ENCODE measurements at regions of chr12 and their contacts with region 1.

Region 1: DNA sequence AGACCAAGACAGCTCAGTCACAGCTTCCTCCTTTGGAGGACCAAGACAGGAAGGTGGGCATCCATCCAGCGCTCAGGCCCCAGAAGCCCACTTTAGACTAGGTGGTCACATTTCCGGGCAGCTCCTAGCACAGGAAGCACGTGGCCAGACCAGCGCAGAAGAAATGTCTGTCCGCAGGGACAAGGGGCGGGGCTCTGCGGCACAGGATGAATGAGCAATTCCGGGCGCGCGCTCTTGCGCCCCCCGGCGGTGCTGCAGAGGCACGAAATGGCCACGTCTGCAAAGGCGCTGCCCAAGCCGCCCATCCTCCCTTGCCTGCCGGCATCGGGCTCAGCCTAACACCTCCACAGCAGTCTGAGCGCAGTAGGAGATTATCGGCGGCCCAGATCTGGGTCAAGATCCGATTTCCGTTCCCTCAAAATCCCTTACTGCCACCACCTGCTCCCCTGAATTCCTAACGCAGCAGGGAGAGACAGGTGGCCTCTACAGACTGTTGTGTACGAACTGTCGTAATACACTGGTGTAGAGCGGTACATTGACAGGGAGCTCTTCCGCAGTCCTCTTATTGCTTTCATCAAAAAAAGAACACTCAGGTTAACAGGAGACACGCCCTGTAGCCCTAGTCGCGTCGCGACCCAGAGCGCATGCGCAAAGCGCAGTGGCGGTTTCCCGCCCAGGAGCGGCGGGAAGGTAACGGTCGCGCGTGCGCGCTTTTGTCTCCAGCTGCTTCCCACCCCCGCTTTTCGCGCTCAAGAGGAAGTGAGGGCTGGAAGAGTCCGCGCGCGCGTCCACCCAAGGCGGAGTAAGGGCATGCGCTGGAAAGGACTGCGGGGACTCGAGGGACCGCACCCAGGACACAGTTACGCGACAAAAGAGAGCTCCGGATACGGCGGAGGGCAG is 794 bp downstream of the TUBA1B start:
- DNase-seq: peak; percentile 92
- H3K4me3 Mint-ChIP-seq: peak overlapping the region; percentile 98
- H3K27ac Mint-ChIP-seq: peak overlapping the region; percentile 93
- H3K4me1 Mint-ChIP-seq: peaks cover 59% of the 10 kb centered on the region
- H3K27me3 Mint-ChIP-seq: no peaks in the 10 kb centered on the region

Region 2: GRCh38 chr12:49018261-49019119 is 111.9 kb before region 1 on chr12 and contains the start of gene PRKAG1:
- intact Hi-C with region 1: loop called (anchors 1 kb)
- DNase-seq: peak; percentile 97
- H3K4me3 Mint-ChIP-seq: peak within 1 kb of the TSS; percentile 88
- H3K27ac Mint-ChIP-seq: peak within 1 kb of the TSS; percentile 95
- H3K4me1 Mint-ChIP-seq: peaks cover 53% of the 10 kb centered on the region
- H3K27me3 Mint-ChIP-seq: no peaks in the 10 kb centered on the region
- total RNA-seq, gene PRKAG1: 85.0 and 85.1 TPM in 2 replicates

Region 3: DNA sequence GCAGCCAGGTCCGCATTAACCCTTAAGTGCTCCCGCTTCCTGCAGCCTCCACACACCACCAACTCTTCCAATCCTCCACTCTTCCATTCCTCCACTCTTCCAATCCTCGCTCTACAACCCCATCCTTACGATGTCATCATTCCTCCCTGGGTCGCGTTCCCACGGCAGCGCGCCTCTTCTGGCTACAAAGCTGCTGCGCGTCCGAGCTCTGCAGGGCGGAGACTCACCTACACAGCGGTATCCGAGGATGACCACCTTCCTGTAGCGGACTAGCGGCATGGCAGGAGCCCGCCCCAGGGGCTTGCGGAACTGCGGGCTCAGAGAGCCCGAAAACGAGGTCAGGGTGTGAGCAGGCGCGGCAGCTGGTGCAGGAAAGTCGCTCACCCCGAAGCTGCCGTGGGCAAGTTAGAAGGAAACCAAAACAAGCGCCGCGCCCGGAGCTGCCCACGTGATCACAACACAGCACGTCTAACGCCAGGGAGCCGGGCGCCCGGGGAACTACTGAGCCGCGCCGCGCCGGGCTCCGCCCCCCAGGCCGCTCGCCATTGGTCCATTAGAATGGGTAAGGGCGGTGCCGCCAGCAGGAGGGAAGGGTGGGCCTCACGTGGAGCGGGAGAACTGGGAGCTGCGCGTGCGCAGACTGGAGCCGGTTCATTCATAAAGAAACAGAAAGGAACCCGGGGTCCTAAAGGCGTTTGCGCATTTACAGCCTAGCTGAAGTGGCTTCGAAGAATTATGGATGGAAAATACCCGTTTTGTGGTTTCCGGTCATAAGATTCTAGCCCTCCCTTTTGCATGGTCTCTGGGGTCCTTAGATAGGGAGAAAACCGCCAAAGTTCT is 60.7 kb before region 1 on chr12 and contains the start of gene RHEBL1:
- intact Hi-C with region 1: loop called (anchors 1 kb)
- DNase-seq: peak; percentile 100
- H3K4me3 Mint-ChIP-seq: peak within 1 kb of the TSS; percentile 100
- H3K27ac Mint-ChIP-seq: peak within 1 kb of the TSS; percentile 97
- H3K4me1 Mint-ChIP-seq: peaks cover 26% of the 10 kb centered on the region
- H3K27me3 Mint-ChIP-seq: no peaks in the 10 kb centered on the region
- total RNA-seq, gene RHEBL1: 8.6 and 10.7 TPM in 2 replicates

Region 4: DNA sequence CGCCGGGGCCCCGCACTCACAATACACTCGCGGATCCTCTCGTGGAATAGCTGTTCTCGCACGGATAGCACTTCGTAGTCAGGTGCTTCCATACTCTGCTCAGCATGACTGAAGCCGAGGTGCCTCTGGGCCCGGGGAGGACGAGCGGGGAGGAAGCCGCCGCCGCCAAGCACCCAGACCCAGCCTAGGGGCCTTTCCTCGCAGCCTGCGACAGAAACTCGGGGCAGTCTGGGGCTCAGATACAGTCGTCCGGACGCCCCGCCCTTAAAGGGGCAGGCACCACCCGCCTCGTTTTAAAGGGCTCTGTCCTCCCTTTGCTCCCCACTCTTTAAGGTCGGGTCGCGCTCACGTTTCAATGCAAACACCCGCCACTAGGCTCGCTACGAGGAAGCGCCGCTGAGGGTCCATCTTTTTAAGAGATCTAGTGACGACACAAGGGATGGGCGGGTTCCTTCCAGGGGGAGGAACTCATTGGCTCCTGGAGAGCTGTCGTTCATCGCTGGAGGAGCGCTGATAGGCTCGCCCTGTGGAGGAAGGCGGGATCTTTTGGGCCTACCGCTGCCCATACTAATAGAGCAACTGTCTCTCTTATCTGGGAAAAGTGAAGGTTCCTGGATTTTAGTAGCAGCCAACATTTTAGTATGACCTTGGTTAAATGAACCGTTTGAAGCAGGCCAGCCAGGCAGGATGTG is 19.8 kb before region 1 on chr12 and contains the start of gene LMBR1L:
- intact Hi-C with region 1: loop called (anchors 1 kb)
- DNase-seq: peak; percentile 93
- H3K4me3 Mint-ChIP-seq: peak within 1 kb of the TSS; percentile 93
- H3K27ac Mint-ChIP-seq: peak within 1 kb of the TSS; percentile 92
- H3K4me1 Mint-ChIP-seq: peaks cover 37% of the 10 kb centered on the region
- H3K27me3 Mint-ChIP-seq: no peaks in the 10 kb centered on the region
- total RNA-seq, gene LMBR1L: 50.4 and 52.5 TPM in 2 replicates

Region 5: DNA sequence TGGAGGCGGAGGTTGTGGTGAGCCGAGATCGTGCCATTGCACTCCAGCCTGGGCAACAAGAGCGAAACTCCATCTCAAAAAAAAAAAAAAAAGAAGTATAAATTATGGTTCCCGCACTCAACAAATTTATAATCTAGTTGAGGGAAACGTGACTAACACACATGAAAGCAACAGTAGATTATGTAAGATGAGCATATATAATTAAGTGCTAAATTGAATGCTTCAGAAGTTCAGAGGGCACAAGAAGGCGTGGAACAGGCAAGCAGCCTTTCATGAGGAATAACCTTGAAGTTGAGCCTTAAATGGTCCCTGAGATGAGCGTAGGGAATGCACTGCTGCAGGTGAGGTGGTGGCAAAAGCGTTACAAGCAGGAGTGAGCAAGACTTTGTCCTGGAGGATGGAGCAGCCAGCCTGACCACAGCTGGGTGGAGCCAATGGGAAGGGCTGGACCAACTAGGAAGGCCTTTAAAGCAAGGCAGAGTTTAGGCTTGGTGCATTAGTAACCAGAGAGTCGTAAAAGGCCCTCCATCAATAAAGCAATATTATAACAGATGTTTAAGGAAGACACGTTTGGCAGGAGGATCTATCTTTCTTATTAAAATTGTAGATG is 89.1 kb after region 1 on chr12:
- intact Hi-C with region 1: no loop called
- DNase-seq: no peak
- H3K4me3 Mint-ChIP-seq: no peak overlapping the region
- H3K27ac Mint-ChIP-seq: no peak overlapping the region
- H3K4me1 Mint-ChIP-seq: no peaks in the 10 kb centered on the region
- H3K27me3 Mint-ChIP-seq: peaks cover 5% of the 10 kb centered on the region

Region 6: GRCh38 chr12:49232940-49233841 is 102.8 kb after region 1 on chr12:
- intact Hi-C with region 1: loop called (anchors 1 kb)
- DNase-seq: no peak
- H3K4me3 Mint-ChIP-seq: peak overlapping the region; percentile 67
- H3K27ac Mint-ChIP-seq: peak overlapping the region; percentile 73
- H3K4me1 Mint-ChIP-seq: peaks cover 9% of the 10 kb centered on the region
- H3K27me3 Mint-ChIP-seq: peaks cover 13% of the 10 kb centered on the region

Region 7: GRCh38 chr12:49322708-49323523 is 192.5 kb after region 1 on chr12 and contains the start of gene TROAP:
- intact Hi-C with region 1: loop called (anchors 1 kb)
- DNase-seq: peak; percentile 97
- H3K4me3 Mint-ChIP-seq: peak within 1 kb of the TSS; percentile 96
- H3K27ac Mint-ChIP-seq: peak within 1 kb of the TSS; percentile 94
- H3K4me1 Mint-ChIP-seq: peaks cover 28% of the 10 kb centered on the region
- H3K27me3 Mint-ChIP-seq: peaks cover 4% of the 10 kb centered on the region
- total RNA-seq, gene TROAP: 46.0 TPM in 2 replicates

Region 8: GRCh38 chr12:49567611-49568441 is 437.4 kb after region 1 on chr12 and contains the start of gene MCRS1:
- intact Hi-C with region 1: loop called (anchors 5 kb)
- DNase-seq: peak; percentile 85
- H3K4me3 Mint-ChIP-seq: peak within 1 kb of the TSS; percentile 95
- H3K27ac Mint-ChIP-seq: peak within 1 kb of the TSS; percentile 96
- H3K4me1 Mint-ChIP-seq: peaks cover 57% of the 10 kb centered on the region
- H3K27me3 Mint-ChIP-seq: no peaks in the 10 kb centered on the region
- total RNA-seq, gene MCRS1: 77.1 and 77.9 TPM in 2 replicates